PC-3 (cell line): ENCODE measurements at regions of chr14 and their contacts with region 1.

Region 1: GRCh38 chr14:50116181-50116956 is at the start of gene VCPKMT:
- DNase-seq: peak; percentile 96
- ATAC-seq: peak; percentile 99
- H3K4me3 ChIP-seq: peak within 1 kb of the TSS; percentile 91
- H3K27ac ChIP-seq: peak within 1 kb of the TSS; percentile 67
- H3K4me1 ChIP-seq: peaks cover 23% of the 10 kb centered on the region
- H3K27me3 ChIP-seq: no peaks in the 10 kb centered on the region
- CTCF ChIP-seq: no peak
- total RNA-seq, gene VCPKMT: 8.2 and 8.8 TPM in 2 replicates

Region 2: GRCh38 chr14:50198499-50198898 is 82.1 kb after region 1 on chr14:
- CTCF ChIA-PET with region 1: no interaction called
- POLR2A ChIA-PET with region 1: interaction called, 12 read pairs
- intact Hi-C with region 1: no loop called
- DNase-seq: no peak
- ATAC-seq: no peak
- H3K4me3 ChIP-seq: no peak overlapping the region
- H3K27ac ChIP-seq: no peak overlapping the region
- H3K4me1 ChIP-seq: no peaks in the 10 kb centered on the region
- H3K27me3 ChIP-seq: no peaks in the 10 kb centered on the region
- CTCF ChIP-seq: no peak

Region 3: GRCh38 chr14:50231475-50232275 is 115.3 kb after region 1 on chr14 and contains the start of gene SOS2:
- CTCF ChIA-PET with region 1: no interaction called
- POLR2A ChIA-PET with region 1: no interaction called
- intact Hi-C with region 1: loop called (anchors 1 kb)
- DNase-seq: peak; percentile 78
- ATAC-seq: peak; percentile 83
- H3K4me3 ChIP-seq: peak within 1 kb of the TSS; percentile 93
- H3K27ac ChIP-seq: peak within 1 kb of the TSS; percentile 18
- H3K4me1 ChIP-seq: peaks cover 34% of the 10 kb centered on the region
- H3K27me3 ChIP-seq: no peaks in the 10 kb centered on the region
- CTCF ChIP-seq: 0 out of 2 replicates have a peak, but pooled peaks have one; percentile 11
- total RNA-seq, gene SOS2: 9.1 and 9.9 TPM in 2 replicates

Region 4: GRCh38 chr14:50260511-50260910 is 144.1 kb after region 1 on chr14:
- CTCF ChIA-PET with region 1: no interaction called
- POLR2A ChIA-PET with region 1: no interaction called
- intact Hi-C with region 1: loop called (anchors 1 kb)
- DNase-seq: peak; percentile 71
- ATAC-seq: peak; percentile 96
- H3K4me3 ChIP-seq: no peak overlapping the region
- H3K27ac ChIP-seq: no peak overlapping the region
- H3K4me1 ChIP-seq: no peaks in the 10 kb centered on the region
- H3K27me3 ChIP-seq: no peaks in the 10 kb centered on the region
- CTCF ChIP-seq: peak; percentile 72

Region 5: GRCh38 chr14:50381823-50382287 is 265.5 kb after region 1 on chr14:
- CTCF ChIA-PET with region 1: no interaction called
- POLR2A ChIA-PET with region 1: no interaction called
- intact Hi-C with region 1: no loop called
- DNase-seq: no peak
- ATAC-seq: no peak
- H3K4me3 ChIP-seq: no peak overlapping the region
- H3K27ac ChIP-seq: no peak overlapping the region
- H3K4me1 ChIP-seq: no peaks in the 10 kb centered on the region
- H3K27me3 ChIP-seq: no peaks in the 10 kb centered on the region
- CTCF ChIP-seq: no peak

Region 6: DNA sequence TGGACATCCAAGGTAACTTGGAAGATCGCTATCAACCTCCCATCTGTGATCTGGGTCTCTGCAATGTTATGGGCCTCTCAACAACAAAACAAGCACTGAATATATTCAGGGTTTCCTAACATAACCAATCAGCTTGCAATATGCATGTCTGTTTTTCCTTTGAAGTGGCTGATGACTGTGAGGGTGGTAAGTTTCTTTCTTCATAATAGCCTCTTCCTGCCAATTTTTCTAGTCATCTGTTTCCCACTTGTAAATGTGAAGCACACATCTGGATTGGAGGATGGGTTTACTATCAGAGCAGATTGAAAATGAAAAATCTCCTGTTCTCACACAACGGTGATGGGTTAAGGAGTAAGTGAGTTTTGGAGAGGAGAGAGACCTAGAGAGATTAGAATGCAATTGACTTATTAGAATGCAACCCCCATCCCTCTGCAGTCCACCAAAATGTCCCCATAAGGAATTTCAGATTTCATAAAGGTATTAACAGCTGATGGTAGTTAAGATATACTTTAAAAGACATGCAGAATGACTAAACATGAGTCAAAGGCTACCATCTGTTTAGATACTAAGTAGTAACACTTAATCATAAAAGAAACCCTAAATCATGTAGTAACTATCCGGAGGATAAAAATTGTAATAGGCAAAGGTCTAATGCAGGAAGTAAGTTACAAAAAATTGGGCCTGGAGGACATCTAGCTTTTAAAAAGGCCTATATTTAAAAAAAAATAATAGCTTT is 610.2 kb after region 1 on chr14:
- CTCF ChIA-PET with region 1: no interaction called
- POLR2A ChIA-PET with region 1: no interaction called
- intact Hi-C with region 1: no loop called
- DNase-seq: peak; percentile 77
- ATAC-seq: peak; percentile 91
- H3K4me3 ChIP-seq: no peak overlapping the region
- H3K27ac ChIP-seq: peak overlapping the region; percentile 48
- H3K4me1 ChIP-seq: peaks cover 21% of the 10 kb centered on the region
- H3K27me3 ChIP-seq: no peaks in the 10 kb centered on the region
- CTCF ChIP-seq: no peak